Psoas muscle (tissue), 8 donors: ENCODE measurements at regions of chr12 and their contacts with region 1.

Region 1: DNA sequence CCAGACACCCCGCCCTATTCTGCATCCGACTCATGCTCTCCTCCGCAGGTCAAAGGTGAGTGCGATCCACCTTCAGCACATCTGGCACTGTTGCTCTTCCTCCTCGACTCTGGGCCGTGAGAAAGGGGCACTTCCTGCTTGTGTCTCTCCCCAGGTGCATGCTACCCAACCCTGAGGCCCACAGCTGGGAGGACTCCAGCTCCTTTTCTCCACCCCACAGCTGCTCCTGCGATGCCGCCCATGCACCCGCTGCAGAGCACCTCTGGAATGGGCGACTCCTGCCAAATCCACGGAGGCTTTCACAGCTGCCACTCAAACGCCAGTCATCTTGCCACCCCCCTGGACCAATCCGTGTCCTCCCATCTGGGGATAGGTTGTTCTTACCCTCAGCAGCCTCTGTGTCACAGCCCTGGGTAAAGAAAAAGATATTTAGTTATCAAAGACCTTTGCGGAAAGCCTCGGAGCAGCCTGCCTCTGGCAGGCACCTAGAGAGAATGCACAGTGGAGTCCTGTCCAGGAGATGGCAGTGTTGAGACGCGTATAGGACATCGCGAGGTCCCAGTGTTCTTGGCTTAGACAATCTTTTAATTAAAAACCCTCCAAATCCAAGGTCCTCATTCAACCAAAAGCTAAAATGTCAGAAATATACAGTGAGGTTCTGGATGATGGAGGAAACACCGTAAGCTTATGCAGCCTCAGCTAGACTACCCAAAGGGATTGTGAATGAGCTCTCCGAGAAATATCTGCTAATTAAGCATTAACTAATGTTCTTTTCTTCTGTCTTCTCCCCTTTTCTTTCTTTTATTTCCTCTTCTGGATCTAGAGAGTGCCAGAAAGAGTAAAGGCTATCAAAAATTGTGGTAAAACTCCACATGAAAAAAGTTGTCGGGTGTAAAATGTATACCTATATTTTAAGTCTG is 54.3 kb downstream of the MYRFL start:
- DNase-seq: peak; percentile 38 to 67
- ATAC-seq: peak; percentile 73 to 95 (median 91)
- H3K4me3 ChIP-seq: peak overlapping the region; percentile 39
- H3K27ac ChIP-seq: no peak overlapping the region
- H3K4me1 ChIP-seq: peaks cover 3% of the 10 kb centered on the region
- H3K27me3 ChIP-seq: no peaks in the 10 kb centered on the region
- CTCF ChIP-seq: peak; percentile 92

Region 2: GRCh38 chr12:69981881-69982475 is 102.7 kb after region 1 on chr12:
- intact Hi-C with region 1: no loop called
- DNase-seq: no peak
- ATAC-seq: no peak
- H3K4me3 ChIP-seq: no peak overlapping the region
- H3K27ac ChIP-seq: no peak overlapping the region
- H3K4me1 ChIP-seq: no peaks in the 10 kb centered on the region
- H3K27me3 ChIP-seq: no peaks in the 10 kb centered on the region
- CTCF ChIP-seq: no peak

Region 3: GRCh38 chr12:70576346-70577282 is 697.3 kb after region 1 on chr12:
- intact Hi-C with region 1: loop called (anchors 2 kb)
- DNase-seq: no peak
- ATAC-seq: peak in 2 of 4 donors; percentile 66 to 77
- H3K4me3 ChIP-seq: no peak overlapping the region
- H3K27ac ChIP-seq: no peak overlapping the region
- H3K4me1 ChIP-seq: no peaks in the 10 kb centered on the region
- H3K27me3 ChIP-seq: no peaks in the 10 kb centered on the region
- CTCF ChIP-seq: peak; percentile 85

Region 4: GRCh38 chr12:70719672-70720420 is 840.5 kb after region 1 on chr12:
- intact Hi-C with region 1: loop called in 1 of 2 experiments (anchors 5 kb)
- DNase-seq: peak; percentile 27 to 60
- ATAC-seq: peak in 2 of 4 donors; percentile 56 to 74
- H3K4me3 ChIP-seq: peak overlapping the region; percentile 35
- H3K27ac ChIP-seq: peak overlapping the region; percentile 34
- H3K4me1 ChIP-seq: no peaks in the 10 kb centered on the region
- H3K27me3 ChIP-seq: no peaks in the 10 kb centered on the region
- CTCF ChIP-seq: peak; percentile 81

Region 5: DNA sequence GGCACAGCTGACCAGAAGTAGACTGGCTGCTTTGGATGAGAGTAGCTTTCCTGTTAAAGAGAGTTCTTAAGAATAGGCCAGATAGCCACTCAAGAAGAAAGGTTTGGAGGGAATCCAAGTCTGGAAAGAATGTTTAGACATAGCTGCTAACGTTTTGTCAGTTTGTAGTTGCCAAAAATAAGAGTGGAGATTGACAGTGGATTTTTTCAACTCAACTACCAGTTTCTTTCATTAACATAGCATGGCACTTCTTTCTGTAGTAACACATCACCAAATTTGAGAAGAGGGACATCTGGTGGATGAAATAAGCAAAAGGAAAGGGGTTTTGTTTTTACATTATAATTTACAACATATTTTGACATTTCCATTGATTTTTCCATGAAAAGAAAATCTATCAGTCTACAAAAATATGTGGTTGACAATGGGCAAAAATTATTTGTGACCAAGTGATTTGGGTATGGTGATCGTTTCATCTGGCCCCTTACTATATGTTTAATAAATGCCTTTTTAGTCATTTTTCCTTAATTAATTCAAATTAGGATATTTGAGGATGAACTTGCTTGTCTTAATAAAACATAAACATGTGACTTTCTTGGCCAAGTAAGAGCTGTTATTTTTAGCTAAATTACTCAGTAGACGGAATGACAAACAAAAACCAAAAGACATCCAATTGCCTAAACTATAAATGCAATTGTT is 970.1 kb after region 1 on chr12:
- intact Hi-C with region 1: loop called in 1 of 2 experiments (anchors 10 kb)
- DNase-seq: no peak
- ATAC-seq: no peak
- H3K4me3 ChIP-seq: no peak overlapping the region
- H3K27ac ChIP-seq: no peak overlapping the region
- H3K4me1 ChIP-seq: no peaks in the 10 kb centered on the region
- H3K27me3 ChIP-seq: no peaks in the 10 kb centered on the region
- CTCF ChIP-seq: peak; percentile 42